Endothelial cell of umbilical vein (primary cell): ENCODE measurements at regions of chr3 and their contacts with region 1.

Region 1: DNA sequence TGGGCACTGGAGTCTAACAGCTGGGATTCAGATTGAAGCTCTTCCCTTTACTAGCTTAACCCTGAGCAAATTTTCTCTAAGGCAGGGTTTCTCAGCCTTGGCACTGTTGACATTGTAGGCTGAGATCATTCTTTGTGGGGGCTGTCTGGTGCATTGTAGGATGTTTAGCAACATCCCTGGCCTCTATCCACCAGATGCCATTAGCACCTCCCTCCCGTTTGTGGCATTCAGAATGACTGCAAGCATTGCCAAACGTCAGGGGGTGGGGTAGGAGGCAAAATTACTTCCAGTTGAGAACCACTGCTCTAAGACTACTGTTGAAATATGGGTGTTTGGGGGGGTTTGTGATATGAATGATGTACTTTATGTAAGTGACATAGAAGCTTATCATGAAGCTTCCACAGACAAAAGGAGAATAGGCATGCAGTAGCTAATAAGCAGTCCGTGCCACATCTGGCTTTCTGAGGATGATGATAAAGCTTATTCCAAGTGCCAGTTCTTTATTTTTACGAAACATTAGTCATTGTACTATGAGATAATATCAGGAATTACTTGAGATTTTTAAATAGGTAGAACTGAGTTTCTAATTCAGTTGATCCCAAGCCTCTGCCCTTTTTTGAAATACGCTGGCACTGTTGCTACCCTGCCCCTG is 39.3 kb downstream of the NKIRAS1 start:
- DNase-seq: peak; percentile 21
- H3K4me3 ChIP-seq: no peak overlapping the region
- H3K27ac ChIP-seq: no peak overlapping the region
- H3K4me1 ChIP-seq: peaks cover 43% of the 10 kb centered on the region
- H3K27me3 ChIP-seq: no peaks in the 10 kb centered on the region
- CTCF ChIP-seq: no peak
- POLR2A ChIP-seq: no peak

Region 2: GRCh38 chr3:23202921-23203707 is 674.3 kb before region 1 on chr3 and contains the start of gene UBE2E2:
- CTCF ChIA-PET with region 1: interaction called, 3 read pairs
- POLR2A ChIA-PET with region 1: no interaction called
- dilution Hi-C with region 1: no loop called
- intact Hi-C with region 1: loop called (anchors 5 kb)
- DNase-seq: peak; percentile 66
- H3K4me3 ChIP-seq: peak within 1 kb of the TSS; percentile 94 to 97 (median 95)
- H3K27ac ChIP-seq: peak within 1 kb of the TSS; percentile 58
- H3K4me1 ChIP-seq: peaks cover 5% of the 10 kb centered on the region
- H3K27me3 ChIP-seq: peaks cover 6 to 8% of the 10 kb centered on the region in 2 experiments
- CTCF ChIP-seq: no peak
- POLR2A ChIP-seq: no peak
- total RNA-seq, gene UBE2E2: 32.8 and 45.4 TPM in 2 replicates

Region 3: DNA sequence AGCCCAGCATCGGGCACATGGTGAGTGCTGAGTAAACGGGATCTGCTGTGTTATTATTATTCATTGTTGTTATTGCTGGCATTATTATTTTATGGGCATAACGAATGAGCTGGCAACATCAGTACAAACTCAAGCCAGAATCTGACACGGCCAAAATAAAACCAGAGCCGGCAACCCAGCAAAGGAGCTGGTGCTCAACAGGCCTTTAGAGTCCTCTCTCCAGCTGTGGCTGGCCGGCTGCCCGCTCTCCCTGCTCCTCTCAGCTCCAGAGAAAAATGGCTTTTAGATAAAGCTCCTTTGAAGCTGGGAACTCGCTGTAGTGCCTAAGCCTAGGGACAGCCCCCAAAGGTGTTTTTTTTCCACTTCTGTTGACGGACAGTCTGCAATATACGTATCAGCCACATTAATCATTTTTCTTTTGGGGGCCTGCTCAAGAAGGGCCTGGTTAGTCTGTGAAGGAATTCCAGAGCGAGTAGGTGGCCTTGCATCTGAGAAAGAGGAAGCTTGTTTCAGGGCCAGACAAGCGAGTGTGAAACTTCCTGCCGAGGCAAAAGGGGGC is 265.6 kb before region 1 on chr3:
- CTCF ChIA-PET with region 1: no interaction called
- POLR2A ChIA-PET with region 1: no interaction called
- dilution Hi-C with region 1: no loop called
- intact Hi-C with region 1: no loop called
- DNase-seq: peak; percentile 63
- H3K4me3 ChIP-seq: no peak overlapping the region
- H3K27ac ChIP-seq: peak overlapping the region; percentile 28
- H3K4me1 ChIP-seq: peaks cover 18% of the 10 kb centered on the region
- H3K27me3 ChIP-seq: no peaks in the 10 kb centered on the region
- CTCF ChIP-seq: no peak
- POLR2A ChIP-seq: no peak

Region 4: GRCh38 chr3:23726811-23727548 is 150.5 kb before region 1 on chr3:
- CTCF ChIA-PET with region 1: no interaction called
- POLR2A ChIA-PET with region 1: no interaction called
- dilution Hi-C with region 1: no loop called
- intact Hi-C with region 1: no loop called
- DNase-seq: no peak
- H3K4me3 ChIP-seq: no peak overlapping the region
- H3K27ac ChIP-seq: no peak overlapping the region
- H3K4me1 ChIP-seq: no peaks in the 10 kb centered on the region
- H3K27me3 ChIP-seq: no peaks in the 10 kb centered on the region
- CTCF ChIP-seq: no peak
- POLR2A ChIP-seq: no peak

Region 5: GRCh38 chr3:23805633-23806533 is 71.6 kb before region 1 on chr3 and contains the start of gene UBE2E1:
- CTCF ChIA-PET with region 1: interaction called, 7 read pairs
- POLR2A ChIA-PET with region 1: no interaction called
- dilution Hi-C with region 1: no loop called
- intact Hi-C with region 1: loop called (anchors 2 kb)
- DNase-seq: peak; percentile 55
- H3K4me3 ChIP-seq: peak within 1 kb of the TSS; percentile 81 to 95 (median 94)
- H3K27ac ChIP-seq: peak within 1 kb of the TSS; percentile 42
- H3K4me1 ChIP-seq: peaks cover 25% of the 10 kb centered on the region
- H3K27me3 ChIP-seq: no peaks in the 10 kb centered on the region
- CTCF ChIP-seq: peak in 1 of 2 donors; percentile 4
- POLR2A ChIP-seq: peak; percentile 56
- total RNA-seq, gene UBE2E1: 114 TPM in 2 replicates

Region 6: DNA sequence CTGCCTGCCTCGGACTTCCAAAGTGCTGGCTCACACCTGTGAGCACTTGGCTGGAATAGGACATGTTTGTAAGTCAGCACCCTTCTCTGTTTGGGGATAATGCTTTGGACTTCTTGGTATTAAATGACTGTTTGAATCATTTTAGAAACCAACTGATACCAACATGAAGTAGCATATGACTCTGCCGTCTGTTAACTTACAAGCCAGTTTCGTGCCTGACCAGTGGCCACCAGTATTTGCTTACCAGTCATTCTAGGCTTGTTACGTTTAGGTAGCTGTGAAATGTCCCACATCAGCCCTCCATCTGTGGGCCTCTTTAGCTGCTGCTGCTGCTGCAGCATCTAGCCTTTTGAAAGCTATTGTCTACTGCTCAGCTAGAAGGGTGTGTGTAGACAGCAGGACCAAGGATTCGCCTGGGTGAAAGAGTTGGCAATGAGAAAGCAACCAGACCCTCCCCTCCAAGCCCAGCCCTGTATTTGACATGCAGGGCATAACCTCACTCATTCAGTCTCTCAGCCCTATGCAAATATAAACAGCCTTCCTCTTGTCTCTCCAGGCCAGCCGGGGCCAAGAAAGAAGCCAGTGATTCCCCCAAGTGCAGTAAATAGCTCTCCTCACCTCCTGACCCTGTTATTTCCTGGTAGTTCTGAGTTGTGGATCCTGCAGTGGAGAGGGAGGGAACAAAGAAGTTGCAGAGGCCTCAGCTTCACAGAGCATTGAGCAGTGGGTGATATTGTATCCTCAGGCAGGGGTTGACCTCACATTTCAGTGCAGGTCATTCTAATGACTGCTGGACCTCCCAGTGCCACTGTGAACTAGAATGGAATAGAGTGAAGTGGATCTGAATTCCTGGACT is 11.6 kb before region 1 on chr3:
- CTCF ChIA-PET with region 1: interaction called, 16 read pairs
- POLR2A ChIA-PET with region 1: interaction called, 6 read pairs
- dilution Hi-C with region 1: no loop called
- intact Hi-C with region 1: no loop called
- DNase-seq: peak; percentile 87
- H3K4me3 ChIP-seq: no peak overlapping the region
- H3K27ac ChIP-seq: peak overlapping the region; percentile 4
- H3K4me1 ChIP-seq: peaks cover 48% of the 10 kb centered on the region
- H3K27me3 ChIP-seq: no peaks in the 10 kb centered on the region
- CTCF ChIP-seq: no peak
- POLR2A ChIP-seq: no peak